HEK293T (cell line): ENCODE measurements at regions of chr5 and their contacts with region 1.

Region 1: DNA sequence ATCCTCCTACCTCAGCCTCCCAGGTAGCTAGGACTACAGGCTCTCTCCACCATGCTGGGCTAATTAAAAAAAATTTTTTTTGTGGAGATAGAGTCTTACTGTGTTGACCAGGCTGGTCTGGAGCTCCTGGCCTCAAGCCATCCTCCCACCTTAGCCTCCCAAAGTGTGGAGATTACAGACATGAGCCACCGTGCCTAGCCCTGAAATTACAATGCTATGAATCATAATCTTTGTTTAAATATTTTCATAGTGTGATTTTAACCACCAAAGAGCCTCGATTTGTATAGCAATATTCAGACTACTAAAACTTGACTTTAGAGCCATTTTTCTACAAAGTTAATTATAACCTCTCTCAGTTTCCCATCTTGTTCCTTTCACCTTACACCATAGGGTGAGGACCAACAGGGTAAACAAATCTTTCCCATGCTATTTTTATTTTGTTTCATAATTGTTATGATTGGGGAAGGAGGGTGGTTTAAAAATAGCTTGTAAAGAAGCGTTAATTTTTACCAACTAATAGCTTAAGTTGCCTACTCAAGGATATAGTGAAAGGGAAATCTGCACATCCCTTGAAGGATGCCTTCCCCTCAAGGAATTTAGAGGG is 32.7 kb downstream of the UBE2D2 start:
- DNase-seq: no peak

Region 2: GRCh38 chr5:139611703-139612584 is 18.1 kb after region 1 on chr5:
- CTCF ChIA-PET with region 1: interaction called, 11 read pairs
- POLR2A ChIA-PET with region 1: no interaction called
- DNase-seq: no peak

Region 3: DNA sequence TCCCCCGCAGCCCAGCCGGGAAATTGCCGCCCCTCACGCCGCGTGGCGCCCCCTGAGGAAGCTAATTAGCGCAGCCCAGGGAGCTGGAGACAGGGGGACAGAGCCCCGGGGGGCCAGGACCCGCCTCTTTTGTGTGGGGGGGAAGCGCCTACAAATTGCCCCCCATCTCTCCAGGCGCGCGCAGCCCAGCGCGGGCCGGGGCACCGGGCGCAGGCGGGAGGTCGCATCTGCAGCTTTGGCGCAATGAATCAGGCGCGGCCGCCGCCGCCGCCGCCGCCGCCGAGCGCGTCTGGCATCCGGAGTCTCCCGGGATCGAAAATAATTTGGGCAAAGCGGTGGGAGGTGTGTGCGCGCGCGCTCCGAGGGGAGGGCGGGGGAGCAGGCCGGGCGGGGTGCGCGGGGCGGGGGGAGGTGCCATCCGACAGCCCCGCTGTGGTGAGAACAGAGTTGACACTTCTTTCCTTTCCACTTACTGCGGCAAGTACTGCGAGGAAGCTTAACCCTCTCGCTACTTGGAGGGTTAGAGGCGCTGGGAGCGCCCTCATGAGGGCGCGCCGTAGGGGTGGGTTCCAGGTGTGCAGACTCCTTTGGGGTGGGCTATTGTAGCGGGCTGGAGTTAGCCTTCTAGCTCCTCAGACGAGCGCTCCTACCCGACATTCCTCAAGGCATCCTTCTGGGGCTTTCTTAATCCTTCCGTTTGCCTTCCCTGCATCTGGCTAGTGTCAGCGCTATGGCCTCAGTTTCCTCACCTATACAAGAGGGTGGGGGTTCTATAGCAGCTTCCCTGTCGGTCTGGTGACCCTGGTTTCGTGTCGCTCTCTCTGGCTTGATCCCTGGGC is 117.5 kb after region 1 on chr5:
- CTCF ChIA-PET with region 1: no interaction called
- POLR2A ChIA-PET with region 1: no interaction called
- DNase-seq: peak; percentile 67

Region 4: DNA sequence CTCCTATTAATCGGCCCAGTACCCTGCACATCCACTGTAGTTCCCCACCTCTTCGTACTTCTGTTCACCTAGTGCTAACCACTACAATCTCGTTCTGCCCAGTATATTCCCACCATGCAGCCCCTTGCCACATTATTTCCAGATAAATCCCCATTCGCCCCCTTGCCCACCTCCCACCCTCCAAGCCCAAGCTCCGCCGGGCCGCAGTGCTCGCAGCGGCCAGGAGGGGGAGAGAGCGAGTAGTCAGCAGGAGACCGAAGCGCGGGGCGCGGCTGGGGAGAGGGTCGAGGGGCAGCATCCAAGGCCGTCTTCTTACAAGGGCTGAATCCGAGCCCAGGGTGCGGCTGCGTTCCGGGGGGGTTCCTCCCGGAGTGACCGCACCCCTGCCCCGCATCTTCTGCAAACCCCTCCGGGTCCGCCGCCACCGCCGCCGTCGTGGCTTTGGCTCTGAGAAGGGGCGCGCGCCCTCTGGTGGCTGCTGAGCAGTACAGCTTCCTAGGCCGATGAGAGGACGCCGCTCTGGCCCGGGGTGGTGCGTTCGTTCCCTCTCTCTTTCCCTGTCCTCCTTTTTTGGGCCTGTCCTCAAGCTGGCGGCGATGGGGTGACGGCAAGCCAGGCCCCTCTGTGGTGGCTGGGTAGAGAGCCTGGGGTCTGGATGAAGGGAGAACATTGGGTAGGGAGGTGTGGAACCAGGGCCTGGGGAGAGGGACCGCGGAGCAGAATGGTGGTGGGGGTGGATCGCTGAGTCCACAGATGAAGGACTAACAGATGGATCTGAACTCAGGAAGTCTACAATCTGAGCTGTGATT is 171.8 kb after region 1 on chr5:
- CTCF ChIA-PET with region 1: no interaction called
- POLR2A ChIA-PET with region 1: no interaction called
- DNase-seq: peak; percentile 83

Region 5: GRCh38 chr5:139974661-139975060 is 380.8 kb after region 1 on chr5:
- CTCF ChIA-PET with region 1: no interaction called
- POLR2A ChIA-PET with region 1: no interaction called
- DNase-seq: no peak